ENCODE measurements at regions of chr12 and their contacts with region 1.

Region 1: DNA sequence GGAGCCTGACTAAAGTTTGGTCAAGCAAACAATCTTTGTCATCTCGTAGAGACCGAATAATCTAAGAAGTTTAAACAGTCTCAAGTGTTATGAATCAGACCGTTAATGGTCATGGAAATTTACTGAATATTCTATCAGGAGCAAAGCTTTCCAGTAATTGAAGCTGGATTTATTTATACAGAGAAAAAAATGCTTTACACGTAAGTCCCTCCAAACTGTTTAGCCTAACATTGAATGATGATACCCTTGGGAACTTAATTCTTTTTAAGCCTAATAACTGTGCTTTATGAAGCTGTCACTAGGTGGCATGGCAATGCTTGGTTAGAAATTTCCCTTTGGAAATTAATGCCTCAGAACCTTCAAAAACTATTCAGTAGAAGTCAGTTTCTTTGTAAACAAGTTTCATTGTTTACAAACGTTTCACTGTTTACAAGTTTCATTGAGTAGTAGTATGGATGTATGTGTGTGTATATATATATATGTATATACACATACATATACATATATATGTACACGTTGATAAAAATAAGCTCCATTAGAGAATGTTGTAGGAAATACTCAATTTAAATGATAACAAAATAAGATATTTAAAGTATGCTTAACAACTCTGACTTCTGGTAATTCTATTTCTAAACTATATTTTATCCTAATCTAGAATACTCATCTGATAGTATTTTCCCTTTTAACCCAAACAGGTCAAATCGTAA is 32.1 kb downstream of the DEPDC4 start:
- DNase-seq: peak; percentile 32
- H3K4me3 Mint-ChIP-seq: no peak overlapping the region
- H3K27ac Mint-ChIP-seq: peak overlapping the region; percentile 70
- H3K4me1 Mint-ChIP-seq: peaks cover 16% of the 10 kb centered on the region
- H3K27me3 Mint-ChIP-seq: no peaks in the 10 kb centered on the region
- CTCF ChIP-seq: peak; percentile 53

Region 2: DNA sequence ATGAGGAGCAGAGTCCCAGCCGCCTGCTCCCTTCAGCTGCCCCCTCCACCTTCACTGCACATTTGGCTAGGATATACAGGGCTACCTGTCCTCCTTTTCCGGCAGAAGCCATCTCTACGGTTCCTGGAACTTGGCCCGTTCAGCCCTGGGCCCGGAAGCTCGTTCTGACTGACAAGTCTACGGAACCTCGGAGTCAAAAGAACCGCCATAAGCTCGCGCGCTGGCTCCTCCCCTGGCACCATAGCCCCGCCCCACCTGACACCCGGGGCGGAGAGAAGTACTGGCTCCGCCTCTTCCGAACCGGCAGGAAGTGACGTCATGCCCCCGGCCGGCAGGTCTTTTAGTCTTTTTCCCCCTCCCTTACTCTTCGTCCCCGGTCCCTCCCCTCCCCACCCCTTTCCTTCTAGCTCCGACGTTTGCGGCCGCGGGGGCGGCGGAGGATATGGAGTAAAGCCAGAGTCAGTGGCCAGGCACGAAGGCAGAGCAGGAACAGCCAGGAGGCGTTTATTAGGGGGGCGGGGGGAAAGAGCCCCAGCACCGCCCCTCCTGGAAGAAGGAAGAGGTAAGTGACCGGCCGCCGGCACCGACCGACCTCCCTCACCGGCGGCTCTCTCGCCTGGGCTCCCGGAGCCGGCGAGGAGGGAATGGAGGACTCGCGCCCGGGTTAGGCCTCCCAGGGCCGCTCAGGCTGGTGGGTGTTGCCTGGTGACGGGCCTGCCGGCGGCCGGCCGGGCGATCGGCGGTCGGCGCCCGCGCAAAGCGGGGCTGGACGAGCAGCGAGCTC is 32.3 kb after region 1 on chr12 and contains the starts of genes DEPDC4 and SCYL2:
- CTCF ChIA-PET with region 1: interaction called, 22 read pairs
- intact Hi-C with region 1: no loop called
- DNase-seq: peak; percentile 96
- H3K4me3 Mint-ChIP-seq: peak within 1 kb of the TSS; percentile 94
- H3K27ac Mint-ChIP-seq: peak within 1 kb of the TSS; percentile 48
- H3K4me1 Mint-ChIP-seq: peaks cover 12% of the 10 kb centered on the region
- H3K27me3 Mint-ChIP-seq: no peaks in the 10 kb centered on the region
- CTCF ChIP-seq: no peak
- total RNA-seq, gene DEPDC4: 1.9 and 3.7 TPM in 2 replicates
- total RNA-seq, gene SCYL2: 59.9 and 63.4 TPM in 2 replicates

Region 3: GRCh38 chr12:100311317-100311716 is 76.6 kb after region 1 on chr12:
- CTCF ChIA-PET with region 1: no interaction called
- intact Hi-C with region 1: loop called (anchors 10 kb)
- DNase-seq: no peak
- H3K4me3 Mint-ChIP-seq: no peak overlapping the region
- H3K27ac Mint-ChIP-seq: no peak overlapping the region
- H3K4me1 Mint-ChIP-seq: no peaks in the 10 kb centered on the region
- H3K27me3 Mint-ChIP-seq: no peaks in the 10 kb centered on the region
- CTCF ChIP-seq: no peak

Region 4: DNA sequence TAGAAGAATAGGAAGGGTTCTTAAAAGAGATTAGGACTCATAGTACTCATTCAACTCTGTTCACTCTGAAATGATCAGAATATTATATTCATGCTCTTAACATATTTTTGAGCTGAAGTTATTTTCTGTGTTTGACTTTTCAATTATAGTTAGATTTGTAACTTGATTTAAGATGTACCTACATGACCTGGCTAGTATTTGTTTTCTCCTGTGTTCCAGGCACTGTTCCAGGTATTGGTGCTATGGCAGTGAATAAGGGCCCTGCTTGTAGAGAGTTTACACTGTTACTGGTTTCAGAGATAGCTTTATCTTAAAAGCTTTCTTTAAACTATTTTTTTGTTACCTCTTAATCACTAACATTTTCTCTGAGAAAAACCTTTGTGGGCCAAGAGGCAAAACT is 103.0 kb after region 1 on chr12:
- CTCF ChIA-PET with region 1: no interaction called
- intact Hi-C with region 1: loop called (anchors 5 kb)
- DNase-seq: no peak
- H3K4me3 Mint-ChIP-seq: no peak overlapping the region
- H3K27ac Mint-ChIP-seq: no peak overlapping the region
- H3K4me1 Mint-ChIP-seq: no peaks in the 10 kb centered on the region
- H3K27me3 Mint-ChIP-seq: no peaks in the 10 kb centered on the region
- CTCF ChIP-seq: no peak

Region 5: DNA sequence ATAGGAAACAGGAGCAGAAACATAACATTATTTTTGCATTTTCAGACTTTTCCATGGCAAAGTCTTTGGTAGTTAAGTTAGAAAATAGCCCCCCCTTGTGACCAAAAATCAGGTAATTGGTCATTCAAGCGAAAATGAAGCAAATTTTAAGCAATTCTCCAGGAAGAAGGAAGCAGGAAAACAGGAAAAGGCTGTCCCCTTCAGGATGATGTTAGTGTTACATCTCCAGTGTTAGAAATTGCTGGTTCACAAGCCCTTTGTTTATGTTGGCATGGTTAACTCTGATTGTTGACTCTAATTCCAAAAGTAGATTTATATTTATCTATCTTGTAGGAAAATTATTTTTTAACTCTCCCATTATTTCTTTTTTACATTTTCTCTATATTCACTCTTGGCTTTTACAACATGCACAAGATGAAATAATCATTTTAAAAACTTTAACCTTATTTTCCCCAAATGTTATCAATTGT is 319.9 kb after region 1 on chr12:
- CTCF ChIA-PET with region 1: interaction called, 7 read pairs
- intact Hi-C with region 1: loop called (anchors 1 kb)
- DNase-seq: peak; percentile 74
- H3K4me3 Mint-ChIP-seq: no peak overlapping the region
- H3K27ac Mint-ChIP-seq: no peak overlapping the region
- H3K4me1 Mint-ChIP-seq: peaks cover 9% of the 10 kb centered on the region
- H3K27me3 Mint-ChIP-seq: no peaks in the 10 kb centered on the region
- CTCF ChIP-seq: peak; percentile 78

Region 6: GRCh38 chr12:100741084-100741711 is 506.4 kb after region 1 on chr12:
- CTCF ChIA-PET with region 1: no interaction called
- intact Hi-C with region 1: loop called (anchors 5 kb)
- DNase-seq: peak; percentile 27
- H3K4me3 Mint-ChIP-seq: no peak overlapping the region
- H3K27ac Mint-ChIP-seq: no peak overlapping the region
- H3K4me1 Mint-ChIP-seq: no peaks in the 10 kb centered on the region
- H3K27me3 Mint-ChIP-seq: no peaks in the 10 kb centered on the region
- CTCF ChIP-seq: peak; percentile 35